ENCODE measurements at regions of chr20 and their contacts with region 1.

Region 1: DNA sequence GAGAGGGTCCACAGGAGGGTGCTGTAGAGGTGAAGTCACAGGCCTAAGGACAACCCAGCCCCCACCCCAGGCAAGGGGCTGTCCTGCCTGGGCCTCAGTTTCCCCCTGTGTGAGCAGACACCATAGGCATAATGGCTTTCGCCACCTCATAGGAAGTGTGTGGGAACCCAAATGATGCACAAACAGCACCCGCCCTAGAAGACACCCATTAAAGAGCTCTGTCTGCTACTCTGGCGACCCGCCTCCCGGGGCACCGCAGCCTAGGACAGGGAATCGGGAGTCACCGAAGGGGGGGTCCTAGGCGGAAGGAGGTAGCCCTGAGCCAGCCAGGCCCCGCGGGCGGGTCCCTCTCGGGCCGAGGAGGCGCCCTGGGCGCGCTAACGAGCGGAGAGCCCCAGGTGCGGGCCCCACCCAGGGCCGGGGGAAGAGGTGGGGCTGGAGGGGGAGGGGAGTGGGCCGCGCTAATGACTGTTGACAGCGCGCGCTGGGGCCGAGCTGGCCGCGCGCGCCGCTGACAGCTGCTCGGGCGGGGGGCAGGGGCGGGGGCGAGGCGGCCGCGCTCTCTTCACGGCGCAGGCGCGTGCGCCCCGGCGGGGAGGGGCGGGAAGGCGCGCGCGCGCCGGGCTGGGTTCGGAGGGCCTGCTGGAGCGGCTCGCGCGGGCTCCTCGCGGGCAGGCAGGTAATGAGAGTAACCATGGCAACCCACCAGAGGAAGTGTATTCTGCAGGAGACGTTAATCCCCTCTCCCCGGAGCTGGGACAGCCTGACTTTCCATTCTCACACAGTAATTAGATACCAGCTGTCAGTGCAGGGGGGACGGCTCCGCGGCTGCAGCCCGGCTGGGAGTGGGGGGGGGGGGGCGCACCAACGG is 48.9 kb downstream of the NOL4L start:
- DNase-seq: peak; percentile 67 to 69
- H3K4me3 ChIP-seq: peak overlapping the region; percentile 52; the same call in 1 of the 2 replicates
- H3K27ac ChIP-seq: no peak overlapping the region
- H3K4me1 ChIP-seq: peaks cover 60% of the 10 kb centered on the region
- H3K27me3 ChIP-seq: no peaks in the 10 kb centered on the region
- CTCF ChIP-seq: no peak

Region 2: DNA sequence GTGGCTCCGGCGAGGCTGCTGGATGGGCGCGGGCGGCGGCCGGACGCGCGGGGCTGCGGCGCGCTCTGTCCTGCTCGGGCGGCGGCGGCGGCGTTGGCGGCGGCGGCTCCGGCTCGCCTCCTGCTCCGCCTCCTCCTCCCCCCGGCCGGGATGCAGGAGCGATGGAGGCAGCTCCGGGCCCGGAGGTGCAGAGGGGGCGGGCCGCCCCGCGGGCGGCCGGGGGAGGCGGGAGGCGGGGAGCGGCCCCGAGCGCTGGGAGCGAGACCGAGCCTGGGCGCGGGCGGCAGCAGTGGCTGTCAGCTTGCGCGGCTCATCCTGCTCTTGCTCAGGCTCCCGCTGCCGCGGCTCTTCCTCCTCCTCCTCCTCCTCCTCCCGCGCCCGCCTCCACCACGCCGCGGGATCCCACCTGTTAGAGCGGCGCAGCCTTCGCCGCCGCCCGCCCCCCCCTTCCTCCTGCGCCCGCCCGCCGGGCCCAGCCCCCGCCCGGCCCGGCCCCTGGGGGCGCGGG is 48.9 kb after region 1 on chr20 and contains the start of gene NOL4L:
- CTCF ChIA-PET with region 1: interaction called, 7 read pairs
- POLR2A ChIA-PET with region 1: interaction called, 3 read pairs
- intact Hi-C with region 1: loop called (anchors 2 kb)
- DNase-seq: peak in 1 of 2 experiments; percentile 57
- H3K4me3 ChIP-seq: peak within 1 kb of the TSS; percentile 95
- H3K27ac ChIP-seq: no peak within 1 kb of the TSS
- H3K4me1 ChIP-seq: peaks cover 14% of the 10 kb centered on the region
- H3K27me3 ChIP-seq: no peaks in the 10 kb centered on the region
- CTCF ChIP-seq: no peak
- total RNA-seq, gene NOL4L: 40.9 and 44.0 TPM in 2 replicates

Region 3: GRCh38 chr20:32626859-32627636 is 90.9 kb after region 1 on chr20:
- CTCF ChIA-PET with region 1: no interaction called
- POLR2A ChIA-PET with region 1: no interaction called
- intact Hi-C with region 1: loop called (anchors 5 kb)
- DNase-seq: peak in 1 of 2 experiments; percentile 53
- H3K4me3 ChIP-seq: no peak overlapping the region
- H3K27ac ChIP-seq: no peak overlapping the region
- H3K4me1 ChIP-seq: peaks cover 8% of the 10 kb centered on the region; the same call in 1 of the 2 replicates
- H3K27me3 ChIP-seq: no peaks in the 10 kb centered on the region; the same call in 1 of the 2 replicates
- CTCF ChIP-seq: no peak

Region 4: DNA sequence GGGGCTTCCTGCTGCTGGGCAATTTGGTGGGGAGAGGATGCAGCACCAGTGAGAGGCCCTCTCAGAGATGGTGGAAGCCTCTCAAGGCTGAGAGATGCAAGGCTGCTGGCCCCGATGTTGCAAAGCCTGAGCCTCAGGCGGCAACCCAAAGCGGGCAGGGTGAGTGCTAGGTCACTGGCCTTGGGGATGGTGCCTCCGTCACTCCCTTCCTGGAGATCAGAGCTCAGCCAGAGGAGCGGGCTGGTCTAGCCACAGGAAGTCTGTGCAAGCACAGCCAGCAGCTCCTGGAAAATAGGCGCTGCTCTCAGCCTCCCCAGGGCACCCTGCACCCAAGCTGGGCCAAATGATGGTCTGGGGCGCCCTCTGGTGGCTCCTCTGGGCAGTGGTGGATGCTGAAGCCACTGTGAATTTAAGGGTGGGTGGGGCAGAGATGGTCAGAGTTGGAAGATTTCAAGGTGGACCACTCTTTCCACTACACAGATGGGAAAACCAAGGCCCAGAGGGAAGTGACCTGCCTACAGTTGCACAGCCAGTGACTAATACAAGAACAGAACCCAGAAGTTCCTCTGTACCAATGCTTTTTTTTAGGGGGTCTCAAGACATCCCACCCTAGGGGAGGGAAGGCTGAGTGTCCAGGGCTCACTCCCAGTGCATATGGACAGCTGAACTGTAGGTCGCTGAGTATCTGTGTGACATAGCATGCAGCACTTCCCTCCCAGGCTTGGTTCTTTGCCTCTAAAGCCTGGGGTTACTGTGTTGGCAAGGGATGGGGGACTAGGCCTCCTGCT is 116.7 kb after region 1 on chr20:
- CTCF ChIA-PET with region 1: interaction called, 15 read pairs
- POLR2A ChIA-PET with region 1: no interaction called
- intact Hi-C with region 1: loop called (anchors 5 kb)
- DNase-seq: peak; percentile 89 to 92
- H3K4me3 ChIP-seq: no peak overlapping the region
- H3K27ac ChIP-seq: no peak overlapping the region
- H3K4me1 ChIP-seq: peaks cover 22% of the 10 kb centered on the region
- H3K27me3 ChIP-seq: no peaks in the 10 kb centered on the region
- CTCF ChIP-seq: peak; percentile 94

Region 5: DNA sequence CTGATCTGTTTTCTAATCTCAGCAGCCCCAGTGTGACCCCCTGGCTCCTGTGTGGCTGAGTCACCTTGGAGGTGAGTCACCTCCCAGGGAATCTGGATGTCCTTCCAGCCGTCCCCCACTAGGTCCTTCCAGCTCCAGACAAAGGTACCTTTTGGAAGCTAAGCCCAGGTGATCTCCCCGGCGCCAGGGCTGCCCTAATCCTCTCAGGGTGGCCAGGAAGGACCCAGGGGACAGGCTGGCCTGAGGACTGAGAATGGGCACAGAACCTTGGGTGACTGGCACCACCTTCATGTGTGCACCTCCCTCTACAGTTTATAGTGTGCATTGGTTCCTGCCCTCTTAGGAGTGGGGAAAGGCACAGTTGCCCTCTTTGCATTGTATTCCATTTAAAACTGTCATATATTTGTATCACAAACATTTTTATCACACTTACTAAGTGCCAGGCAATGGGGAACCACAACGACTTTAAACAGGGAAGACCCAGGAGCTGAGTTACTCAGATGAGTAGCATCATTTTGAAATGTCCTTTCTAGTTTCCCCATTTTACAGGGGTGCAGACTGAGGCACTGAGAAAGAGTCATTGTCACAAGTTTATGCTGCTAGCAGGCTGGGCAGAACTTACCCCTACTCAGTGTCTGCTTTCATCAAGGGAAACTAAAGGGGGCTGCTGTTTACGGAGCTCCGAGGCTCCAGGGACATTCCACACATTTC is 540.6 kb after region 1 on chr20:
- CTCF ChIA-PET with region 1: no interaction called
- POLR2A ChIA-PET with region 1: no interaction called
- intact Hi-C with region 1: no loop called
- DNase-seq: no peak
- H3K4me3 ChIP-seq: no peak overlapping the region
- H3K27ac ChIP-seq: no peak overlapping the region
- H3K4me1 ChIP-seq: no peaks in the 10 kb centered on the region
- H3K27me3 ChIP-seq: peaks cover 57% of the 10 kb centered on the region
- CTCF ChIP-seq: peak; percentile 59

Measured in PC-9 (cell line).